Common myeloid progenitor, CD34-positive (primary cell): ENCODE measurements at regions of chr7 and their contacts with region 1.

Region 1: DNA sequence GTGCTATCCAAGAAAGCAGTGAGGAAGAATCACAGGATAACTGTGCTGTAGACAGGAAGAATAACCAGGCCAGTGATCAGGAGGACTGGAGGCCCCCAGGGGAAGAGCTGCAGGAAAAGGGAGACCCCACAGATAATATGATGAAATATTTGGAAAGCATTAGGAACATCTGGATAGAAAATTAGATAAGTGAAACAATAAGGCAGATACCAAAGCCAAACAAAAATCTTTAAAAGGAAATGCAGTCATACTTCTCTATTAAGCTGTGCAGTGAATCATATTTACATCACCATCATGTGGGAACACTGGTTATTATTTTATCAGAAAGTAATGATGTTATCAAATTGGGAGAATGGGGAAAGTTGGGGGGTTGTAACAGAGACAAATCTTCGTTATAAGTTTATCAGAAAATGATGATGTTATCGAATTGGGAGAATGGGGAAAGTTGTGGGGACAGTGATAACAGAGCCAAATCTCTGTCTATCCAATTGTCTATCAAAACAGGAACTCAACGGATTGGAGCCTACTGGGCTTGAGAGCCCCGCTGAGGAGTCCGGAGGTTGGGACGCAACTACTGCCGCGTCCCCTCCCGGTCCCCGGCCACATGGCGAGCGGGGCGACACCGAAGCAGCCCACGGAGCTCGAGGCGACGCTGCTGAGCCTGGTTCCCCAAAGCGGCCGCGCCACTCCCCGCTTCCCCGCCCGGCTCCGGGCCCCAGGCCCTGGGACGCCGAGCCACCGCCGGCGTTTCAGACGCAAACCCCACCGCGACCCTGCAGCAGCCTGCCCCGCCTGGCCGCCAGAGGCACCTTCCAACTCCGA is 14.0 kb upstream of the RALA start:
- DNase-seq: peak in 2 of 3 donors; percentile 67 to 81
- H3K4me3 ChIP-seq: peak overlapping the region in 6 of 7 experiments; percentile 29 to 70 (median 41)
- H3K27ac ChIP-seq: no peak overlapping the region
- H3K4me1 ChIP-seq: peaks cover 9 to 34% (median 11%) of the 10 kb centered on the region in 4 experiments
- H3K27me3 ChIP-seq: no peaks in the 10 kb centered on the region

Region 2: GRCh38 chr7:39589323-39590111 is 19.8 kb before region 1 on chr7:
- CTCF ChIA-PET with region 1: interaction called, 14 read pairs
- POLR2A ChIA-PET with region 1: interaction called, 3 read pairs
- DNase-seq: peak; percentile 92 to 99 (median 98)
- H3K4me3 ChIP-seq: peak overlapping the region in 2 of 7 experiments; percentile 18 to 31
- H3K27ac ChIP-seq: peak overlapping the region; percentile 27 to 72
- H3K4me1 ChIP-seq: peaks cover 9 to 42% (median 32%) of the 10 kb centered on the region in 4 experiments
- H3K27me3 ChIP-seq: no peaks in the 10 kb centered on the region

Region 3: GRCh38 chr7:39623018-39623731 is 13.9 kb after region 1 on chr7 and contains the start of gene RALA:
- CTCF ChIA-PET with region 1: interaction called, 33 read pairs
- POLR2A ChIA-PET with region 1: interaction called, 9 read pairs
- DNase-seq: peak; percentile 76 to 84 (median 76)
- H3K4me3 ChIP-seq: peak within 1 kb of the TSS; percentile 71 to 96 (median 90)
- H3K27ac ChIP-seq: peak within 1 kb of the TSS; percentile 57 to 88
- H3K4me1 ChIP-seq: peaks cover 12 to 59% (median 41%) of the 10 kb centered on the region in 4 experiments
- H3K27me3 ChIP-seq: no peaks in the 10 kb centered on the region

Region 4: GRCh38 chr7:39633563-39634477 is 24.5 kb after region 1 on chr7:
- CTCF ChIA-PET with region 1: no interaction called
- POLR2A ChIA-PET with region 1: no interaction called
- DNase-seq: peak in 1 of 3 donors; percentile 29
- H3K4me3 ChIP-seq: no peak overlapping the region
- H3K27ac ChIP-seq: no peak overlapping the region
- H3K4me1 ChIP-seq: peaks cover 8 to 17% (median 12%) of the 10 kb centered on the region in 4 experiments
- H3K27me3 ChIP-seq: no peaks in the 10 kb centered on the region

Region 5: GRCh38 chr7:39754326-39755120 is 145.2 kb after region 1 on chr7:
- CTCF ChIA-PET with region 1: no interaction called
- POLR2A ChIA-PET with region 1: no interaction called
- DNase-seq: peak in 2 of 3 donors; percentile 59 to 69
- H3K4me3 ChIP-seq: peak overlapping the region in 1 of 7 experiments; percentile 10
- H3K27ac ChIP-seq: peak overlapping the region in 1 of 2 experiments; percentile 25
- H3K4me1 ChIP-seq: peaks cover 0 to 9% (median 8%) of the 10 kb centered on the region in 4 experiments
- H3K27me3 ChIP-seq: no peaks in the 10 kb centered on the region